ENCODE measurements at regions of chr14 and their contacts with region 1.

Region 1: GRCh38 chr14:104735830-104736642 is 12.0 kb downstream of the ADSS1 start:
- DNase-seq: peak; percentile 83 to 97
- H3K4me3 ChIP-seq: peak overlapping the region in 1 of 2 donors; percentile 22
- H3K27ac ChIP-seq: peak overlapping the region; percentile 93 to 94
- H3K4me1 ChIP-seq: peaks cover 24 to 65% of the 10 kb centered on the region in 2 donors
- H3K27me3 ChIP-seq: no peaks in the 10 kb centered on the region
- CTCF ChIP-seq: no peak

Region 2: DNA sequence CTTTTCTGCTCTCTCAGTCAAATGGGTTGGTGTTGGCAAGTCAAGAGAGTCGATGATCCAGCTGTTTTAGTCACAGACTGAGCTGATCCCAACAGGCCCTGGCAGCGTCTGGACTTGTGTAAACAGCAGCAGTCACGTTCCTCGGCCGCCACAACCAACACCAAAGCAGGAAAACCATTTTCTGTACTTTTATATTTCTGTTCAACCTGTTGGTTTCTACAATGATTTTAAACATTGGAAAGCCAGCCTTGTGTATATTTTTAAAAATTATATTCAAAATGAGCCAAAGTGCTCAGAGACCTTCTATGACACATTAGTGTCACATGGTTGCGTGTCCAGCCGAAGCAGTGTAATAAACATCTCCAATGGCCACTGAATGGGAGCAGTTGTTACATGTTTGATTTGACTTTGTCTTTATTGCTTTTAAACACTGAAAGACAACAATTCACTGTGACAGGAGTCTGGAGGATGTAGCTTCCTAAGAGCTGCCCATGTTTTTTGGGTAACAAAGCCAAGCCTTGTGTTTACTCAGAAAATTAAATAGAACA is 11.0 kb after region 1 on chr14:
- intact Hi-C with region 1: loop called (anchors 1 kb)
- DNase-seq: peak in 1 of 2 donors; percentile 88
- H3K4me3 ChIP-seq: no peak overlapping the region
- H3K27ac ChIP-seq: peak overlapping the region; percentile 87 to 92
- H3K4me1 ChIP-seq: peaks cover 42 to 63% of the 10 kb centered on the region in 2 donors
- H3K27me3 ChIP-seq: no peaks in the 10 kb centered on the region
- CTCF ChIP-seq: no peak

Region 3: GRCh38 chr14:105480952-105481801 is 745.1 kb after region 1 on chr14:
- intact Hi-C with region 1: loop called (anchors 10 kb)
- DNase-seq: peak; percentile 74 to 97
- H3K4me3 ChIP-seq: peak overlapping the region; percentile 55 to 58
- H3K27ac ChIP-seq: peak overlapping the region; percentile 89 to 99
- H3K4me1 ChIP-seq: peaks cover 32 to 65% of the 10 kb centered on the region in 2 donors
- H3K27me3 ChIP-seq: no peaks in the 10 kb centered on the region
- CTCF ChIP-seq: peak; percentile 98 to 99 (median 99)